ENCODE measurements at regions of chr12 and their contacts with region 1.

Region 1: DNA sequence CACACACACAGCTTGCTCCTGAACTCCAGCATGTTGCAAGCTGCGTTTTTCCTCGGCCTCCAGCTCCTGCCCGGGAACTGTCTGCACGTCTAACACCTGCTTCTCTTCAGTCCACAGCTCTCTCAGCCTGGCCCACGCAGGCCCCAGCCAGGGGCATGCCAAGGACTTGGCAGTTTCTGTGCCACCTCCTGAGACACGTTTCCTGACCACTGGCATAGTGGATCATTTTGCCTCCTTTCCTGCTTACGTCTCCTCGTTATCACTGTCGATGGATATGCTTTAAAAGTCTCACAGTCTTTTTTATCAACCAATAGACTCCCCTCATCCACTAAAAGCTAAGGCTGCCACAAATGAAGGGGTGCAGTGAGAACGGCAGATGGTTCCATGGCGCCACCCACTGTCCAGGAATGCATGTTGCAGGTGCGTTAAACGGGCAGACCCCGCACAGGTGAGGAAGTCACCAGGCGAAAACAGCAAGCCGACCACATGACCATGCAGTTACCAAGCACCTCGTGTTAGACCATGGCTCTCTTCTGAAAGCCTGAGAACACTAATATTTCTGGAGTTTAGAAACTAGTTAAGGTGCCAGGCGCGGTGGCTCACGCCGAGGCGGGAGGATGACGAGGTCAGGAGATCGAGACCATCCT is 14.7 kb upstream of the TEAD4 start:
- DNase-seq: peak; percentile 44 to 77 (median 76)
- ATAC-seq: peak; percentile 67 to 69
- H3K4me3 ChIP-seq: no peak overlapping the region
- H3K27ac ChIP-seq: no peak overlapping the region
- H3K4me1 ChIP-seq: no peaks in the 10 kb centered on the region
- H3K27me3 ChIP-seq: no peaks in the 10 kb centered on the region

Region 2: DNA sequence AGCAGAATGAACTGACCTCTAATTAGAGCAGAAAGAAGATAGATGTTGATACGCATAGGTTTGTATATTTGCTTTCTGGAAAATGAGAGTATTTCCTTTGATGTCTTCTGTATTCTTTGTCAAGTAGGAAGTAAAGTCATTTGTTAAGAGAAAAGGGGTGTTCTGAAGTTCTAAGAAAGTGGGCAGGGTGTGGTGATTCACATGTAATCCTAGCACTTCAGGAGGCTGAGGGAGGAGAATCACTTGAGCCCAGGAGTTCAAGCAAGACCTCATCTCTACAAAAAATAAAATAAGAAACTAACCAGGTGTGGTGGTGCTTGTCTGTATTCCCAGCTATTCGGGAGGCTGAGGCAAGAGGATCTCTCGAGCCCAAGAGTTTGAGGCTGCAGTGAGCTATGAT is 64.7 kb before region 1 on chr12:
- intact Hi-C with region 1: loop called in 3 of 4 experiments (anchors 5 to 10 kb)
- DNase-seq: no peak
- ATAC-seq: no peak
- H3K4me3 ChIP-seq: no peak overlapping the region
- H3K27ac ChIP-seq: no peak overlapping the region
- H3K4me1 ChIP-seq: peaks cover 4% of the 10 kb centered on the region
- H3K27me3 ChIP-seq: no peaks in the 10 kb centered on the region

Region 3: GRCh38 chr12:2890388-2891239 is 53.9 kb before region 1 on chr12 and contains the start of gene TULP3:
- intact Hi-C with region 1: loop called (anchors 5 to 10 kb)
- DNase-seq: peak; percentile 99 to 100 (median 100)
- ATAC-seq: peak; percentile 99
- H3K4me3 ChIP-seq: peak within 1 kb of the TSS; percentile 70
- H3K27ac ChIP-seq: peak within 1 kb of the TSS; percentile 87
- H3K4me1 ChIP-seq: no peaks in the 10 kb centered on the region
- H3K27me3 ChIP-seq: no peaks in the 10 kb centered on the region
- total RNA-seq, gene TULP3: 14.1 to 17.1 (median 15.9) TPM

Region 4: DNA sequence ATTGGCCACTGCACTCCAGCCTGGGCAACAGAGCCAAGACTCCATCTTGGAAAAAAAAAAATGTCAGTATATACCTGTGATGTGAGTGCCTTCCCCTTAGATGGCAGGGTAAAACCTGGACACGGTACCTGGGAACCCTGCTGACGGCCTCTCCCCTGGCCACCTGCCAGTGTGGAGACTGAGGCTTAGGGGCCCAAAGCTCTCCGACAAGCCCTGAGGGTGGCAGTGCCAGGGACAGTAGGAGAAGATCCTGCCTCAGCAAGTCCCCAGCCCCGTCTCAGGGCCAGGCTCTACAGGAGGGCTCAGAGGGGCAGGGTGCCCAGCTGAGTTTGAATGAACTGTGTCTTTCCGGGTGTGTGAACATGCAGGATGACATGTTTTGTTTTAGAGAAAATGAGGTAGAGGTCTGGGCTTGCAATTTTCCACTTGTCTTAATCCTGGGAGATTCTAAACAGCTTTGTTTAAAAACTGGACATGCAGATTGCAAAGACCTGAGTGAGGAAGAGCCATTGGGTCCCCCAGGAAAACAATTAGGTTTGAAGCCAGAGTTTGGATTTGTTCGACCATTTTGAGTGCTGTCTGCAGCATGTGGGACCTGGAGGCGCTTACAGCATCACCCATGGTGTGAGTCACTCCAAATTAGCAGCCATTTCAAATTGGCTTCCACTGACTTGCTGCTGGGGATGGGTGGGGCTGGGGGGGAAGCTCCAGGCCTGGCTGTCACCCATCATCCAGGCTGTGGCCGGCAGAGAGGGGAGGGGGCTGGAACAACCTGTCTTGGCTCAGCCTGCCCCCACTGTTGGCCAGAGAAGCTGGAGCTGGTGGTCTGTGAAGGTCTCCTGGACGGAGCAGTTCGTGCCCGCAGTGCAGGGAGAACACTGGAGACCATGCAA is 143.5 kb after region 1 on chr12:
- intact Hi-C with region 1: no loop called
- DNase-seq: no peak
- ATAC-seq: no peak
- H3K4me3 ChIP-seq: no peak overlapping the region
- H3K27ac ChIP-seq: no peak overlapping the region
- H3K4me1 ChIP-seq: peaks cover 35% of the 10 kb centered on the region
- H3K27me3 ChIP-seq: no peaks in the 10 kb centered on the region

Measured in right cardiac atrium (tissue), 5 donors.